PC-3 (cell line): ENCODE measurements at regions of chr1 and their contacts with region 1.

Region 1: GRCh38 chr1:192808518-192809306 is at the start of gene RGS2:
- DNase-seq: peak; percentile 95
- ATAC-seq: peak; percentile 73
- H3K4me3 ChIP-seq: peak within 1 kb of the TSS; percentile 86
- H3K27ac ChIP-seq: peak within 1 kb of the TSS; percentile 73
- H3K4me1 ChIP-seq: peaks cover 26% of the 10 kb centered on the region
- H3K27me3 ChIP-seq: no peaks in the 10 kb centered on the region
- CTCF ChIP-seq: peak; percentile 50
- total RNA-seq, gene RGS2: 114 and 163 TPM in 2 replicates

Region 2: DNA sequence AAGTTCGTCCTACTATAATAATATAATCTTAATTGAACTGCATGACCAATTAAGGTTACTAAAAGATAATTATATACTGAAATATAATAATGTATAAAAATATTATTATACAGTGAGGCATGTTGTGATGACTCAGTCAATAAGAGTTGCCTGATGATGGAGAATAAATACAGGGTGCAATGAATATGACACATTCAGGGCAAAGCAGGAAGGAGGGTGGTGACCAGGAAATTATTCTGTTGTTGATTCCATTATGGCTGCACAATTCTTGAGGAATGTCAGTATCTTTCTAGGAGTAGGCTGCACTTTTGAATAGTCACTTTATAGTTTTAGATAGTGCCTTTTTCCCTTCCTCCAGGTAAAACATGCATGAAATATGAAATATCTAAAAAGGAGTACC is 538.3 kb before region 1 on chr1:
- CTCF ChIA-PET with region 1: no interaction called
- POLR2A ChIA-PET with region 1: no interaction called
- intact Hi-C with region 1: no loop called
- DNase-seq: peak; percentile 13
- ATAC-seq: peak; percentile 50
- H3K4me3 ChIP-seq: no peak overlapping the region
- H3K27ac ChIP-seq: no peak overlapping the region
- H3K4me1 ChIP-seq: no peaks in the 10 kb centered on the region
- H3K27me3 ChIP-seq: no peaks in the 10 kb centered on the region
- CTCF ChIP-seq: no peak

Region 3: GRCh38 chr1:192477630-192478029 is 331.1 kb before region 1 on chr1:
- CTCF ChIA-PET with region 1: interaction called, 6 read pairs
- POLR2A ChIA-PET with region 1: interaction called, 3 read pairs
- intact Hi-C with region 1: loop called (anchors 2 kb)
- DNase-seq: peak; percentile 62
- ATAC-seq: peak; percentile 69
- H3K4me3 ChIP-seq: no peak overlapping the region
- H3K27ac ChIP-seq: no peak overlapping the region
- H3K4me1 ChIP-seq: peaks cover 8% of the 10 kb centered on the region
- H3K27me3 ChIP-seq: no peaks in the 10 kb centered on the region
- CTCF ChIP-seq: peak; percentile 72

Region 4: GRCh38 chr1:192639607-192640368 is 168.9 kb before region 1 on chr1:
- CTCF ChIA-PET with region 1: no interaction called
- POLR2A ChIA-PET with region 1: interaction called, 6 read pairs
- intact Hi-C with region 1: loop called (anchors 10 kb)
- DNase-seq: peak; percentile 83
- ATAC-seq: peak; percentile 89
- H3K4me3 ChIP-seq: peak overlapping the region; percentile 24; the same call in 1 of the 2 replicates
- H3K27ac ChIP-seq: peak overlapping the region; percentile 74
- H3K4me1 ChIP-seq: peaks cover 39% of the 10 kb centered on the region
- H3K27me3 ChIP-seq: no peaks in the 10 kb centered on the region
- CTCF ChIP-seq: no peak

Region 5: GRCh38 chr1:192700834-192701271 is 107.9 kb before region 1 on chr1:
- CTCF ChIA-PET with region 1: interaction called, 4 read pairs
- POLR2A ChIA-PET with region 1: no interaction called
- intact Hi-C with region 1: loop called (anchors 2 kb)
- DNase-seq: peak; percentile 73
- ATAC-seq: peak; percentile 41
- H3K4me3 ChIP-seq: peak overlapping the region; percentile 32; the same call in 1 of the 2 replicates
- H3K27ac ChIP-seq: peak overlapping the region; percentile 83
- H3K4me1 ChIP-seq: peaks cover 41% of the 10 kb centered on the region
- H3K27me3 ChIP-seq: no peaks in the 10 kb centered on the region
- CTCF ChIP-seq: no peak

Region 6: DNA sequence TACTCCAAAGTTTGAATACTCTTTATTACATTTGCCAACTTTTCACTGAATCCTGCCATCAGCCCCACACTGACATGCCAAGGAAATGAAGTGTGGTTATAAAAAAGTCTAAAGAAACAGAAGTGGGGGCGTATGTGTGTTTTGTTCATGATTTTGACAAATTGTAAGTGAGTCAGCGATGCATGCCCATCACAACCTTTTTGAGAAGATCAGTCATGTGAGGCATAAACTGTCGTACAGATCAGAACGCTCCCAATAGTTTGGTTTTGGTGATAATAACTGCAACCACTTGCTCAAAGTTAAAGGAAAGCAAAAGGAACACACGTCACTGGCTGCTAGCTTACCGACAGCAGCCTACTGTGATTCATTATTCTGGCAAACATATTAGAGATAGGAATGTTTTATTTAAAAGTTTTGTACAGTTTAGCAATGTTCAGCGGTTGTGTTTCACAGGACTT is 95.8 kb after region 1 on chr1:
- CTCF ChIA-PET with region 1: no interaction called
- POLR2A ChIA-PET with region 1: interaction called, 4 read pairs
- intact Hi-C with region 1: loop called (anchors 2 kb)
- DNase-seq: peak; percentile 65
- ATAC-seq: peak; percentile 93
- H3K4me3 ChIP-seq: peak overlapping the region; percentile 57
- H3K27ac ChIP-seq: peak overlapping the region; percentile 69
- H3K4me1 ChIP-seq: peaks cover 14% of the 10 kb centered on the region
- H3K27me3 ChIP-seq: no peaks in the 10 kb centered on the region
- CTCF ChIP-seq: no peak

Region 7: GRCh38 chr1:192998536-192998935 is 189.8 kb after region 1 on chr1:
- CTCF ChIA-PET with region 1: no interaction called
- POLR2A ChIA-PET with region 1: no interaction called
- intact Hi-C with region 1: no loop called
- DNase-seq: peak; percentile 10
- ATAC-seq: no peak
- H3K4me3 ChIP-seq: no peak overlapping the region
- H3K27ac ChIP-seq: no peak overlapping the region
- H3K4me1 ChIP-seq: peaks cover 10% of the 10 kb centered on the region
- H3K27me3 ChIP-seq: no peaks in the 10 kb centered on the region
- CTCF ChIP-seq: peak; percentile 52

Region 8: DNA sequence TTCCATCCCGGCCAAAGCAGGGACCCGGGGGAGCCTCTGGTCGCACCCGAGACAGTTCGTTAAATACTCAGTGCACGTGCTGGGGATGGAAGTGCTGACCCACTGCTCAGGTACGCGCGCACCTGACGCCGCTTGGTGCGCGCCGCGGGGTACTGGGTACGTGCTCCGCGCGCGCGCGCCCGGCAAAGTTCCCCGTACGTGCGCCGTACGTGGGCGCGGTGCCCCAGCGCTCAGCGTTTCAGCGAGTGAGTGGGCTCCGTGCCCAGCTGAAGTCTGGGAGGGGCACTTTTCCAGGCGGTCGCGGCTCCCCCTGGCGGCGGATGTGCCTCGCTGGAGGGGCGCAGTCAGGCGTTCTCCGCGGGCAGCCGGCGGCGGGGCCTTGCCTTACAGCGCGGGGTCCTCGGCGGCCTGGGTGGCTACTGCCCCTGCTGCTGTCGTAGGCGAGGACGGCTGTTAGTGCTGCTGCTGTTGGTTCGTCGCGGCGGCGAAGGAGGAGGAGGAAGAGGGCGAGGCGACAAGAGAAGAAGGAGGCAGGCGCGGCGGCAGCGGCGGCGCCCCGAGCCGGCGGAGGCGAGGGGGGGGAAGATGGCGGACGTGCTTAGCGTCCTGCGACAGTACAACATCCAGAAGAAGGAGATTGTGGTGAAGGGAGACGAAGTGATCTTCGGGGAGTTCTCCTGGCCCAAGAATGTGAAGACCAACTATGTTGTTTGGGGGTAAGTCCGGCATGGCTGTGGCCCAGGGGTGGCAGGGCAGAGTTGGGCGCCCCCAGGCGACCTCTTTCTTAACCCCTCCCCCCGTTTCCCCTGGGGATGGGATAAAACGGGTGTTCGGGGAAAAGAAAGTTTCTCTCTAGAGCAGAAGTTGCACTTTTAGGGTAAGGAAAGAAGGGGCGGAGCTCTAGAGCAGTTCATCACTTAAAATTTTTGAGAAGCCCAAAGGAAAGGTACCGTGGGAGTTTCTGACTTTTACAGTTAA is 313.2 kb after region 1 on chr1 and contains the start of gene CDC73:
- CTCF ChIA-PET with region 1: no interaction called
- POLR2A ChIA-PET with region 1: no interaction called
- intact Hi-C with region 1: loop called (anchors 2 kb)
- DNase-seq: peak; percentile 94
- ATAC-seq: peak; percentile 94
- H3K4me3 ChIP-seq: peak within 1 kb of the TSS; percentile 81
- H3K27ac ChIP-seq: peak within 1 kb of the TSS; percentile 81
- H3K4me1 ChIP-seq: peaks cover 19% of the 10 kb centered on the region
- H3K27me3 ChIP-seq: no peaks in the 10 kb centered on the region
- CTCF ChIP-seq: peak; percentile 66
- total RNA-seq, gene CDC73: 10.0 and 13.4 TPM in 2 replicates